ENCODE measurements at regions of chr1 and their contacts with region 1.

Region 1: DNA sequence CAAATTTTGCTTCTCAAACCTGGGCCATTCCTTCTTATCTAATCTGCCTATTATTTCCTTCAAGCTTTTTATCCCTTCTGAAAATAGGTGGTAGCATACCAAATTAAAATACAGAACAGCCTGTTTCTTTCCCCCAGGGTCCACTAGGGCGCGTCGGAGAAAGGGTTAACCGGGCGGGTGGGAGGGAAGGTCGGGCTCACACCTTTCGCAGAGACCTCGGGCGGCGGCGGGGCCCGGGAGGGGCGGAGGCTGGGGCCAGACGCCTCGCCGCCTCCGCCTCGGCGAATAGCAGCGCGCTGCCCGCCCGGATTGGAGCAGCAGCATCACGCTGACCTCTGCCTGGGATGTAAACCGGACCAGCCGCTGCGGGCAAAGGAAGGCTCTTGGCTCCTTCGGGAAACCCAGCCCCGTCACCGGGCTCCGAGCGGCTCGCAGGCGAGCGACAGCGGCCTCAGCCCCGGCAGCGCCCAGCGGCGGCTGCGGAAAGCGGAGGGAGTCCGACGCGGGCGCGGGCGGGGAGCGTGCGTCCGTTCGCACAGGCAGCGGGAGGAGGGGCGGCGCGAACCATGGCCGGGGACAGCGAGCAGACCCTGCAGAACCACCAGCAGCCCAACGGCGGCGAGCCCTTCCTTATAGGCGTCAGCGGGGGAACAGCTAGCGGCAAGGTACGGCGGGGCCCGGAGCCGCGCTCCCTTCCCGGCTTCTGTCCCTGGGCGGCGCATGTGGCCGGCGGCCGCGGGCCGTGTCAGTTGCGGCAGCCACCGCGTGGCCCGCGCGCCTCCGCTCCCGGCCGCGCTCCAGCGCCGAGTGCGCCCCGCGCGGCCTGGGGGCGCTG is at the start of gene UCK2:
- DNase-seq: peak; percentile 81
- H3K4me3 ChIP-seq: peak within 1 kb of the TSS; percentile 84
- H3K27ac ChIP-seq: peak within 1 kb of the TSS; percentile 85
- H3K4me1 ChIP-seq: peaks cover 14% of the 10 kb centered on the region
- CTCF ChIP-seq: no peak; the same call in 1 of the 2 replicates
- total RNA-seq, gene UCK2: 65.6 and 75.8 TPM in 2 replicates

Region 2: DNA sequence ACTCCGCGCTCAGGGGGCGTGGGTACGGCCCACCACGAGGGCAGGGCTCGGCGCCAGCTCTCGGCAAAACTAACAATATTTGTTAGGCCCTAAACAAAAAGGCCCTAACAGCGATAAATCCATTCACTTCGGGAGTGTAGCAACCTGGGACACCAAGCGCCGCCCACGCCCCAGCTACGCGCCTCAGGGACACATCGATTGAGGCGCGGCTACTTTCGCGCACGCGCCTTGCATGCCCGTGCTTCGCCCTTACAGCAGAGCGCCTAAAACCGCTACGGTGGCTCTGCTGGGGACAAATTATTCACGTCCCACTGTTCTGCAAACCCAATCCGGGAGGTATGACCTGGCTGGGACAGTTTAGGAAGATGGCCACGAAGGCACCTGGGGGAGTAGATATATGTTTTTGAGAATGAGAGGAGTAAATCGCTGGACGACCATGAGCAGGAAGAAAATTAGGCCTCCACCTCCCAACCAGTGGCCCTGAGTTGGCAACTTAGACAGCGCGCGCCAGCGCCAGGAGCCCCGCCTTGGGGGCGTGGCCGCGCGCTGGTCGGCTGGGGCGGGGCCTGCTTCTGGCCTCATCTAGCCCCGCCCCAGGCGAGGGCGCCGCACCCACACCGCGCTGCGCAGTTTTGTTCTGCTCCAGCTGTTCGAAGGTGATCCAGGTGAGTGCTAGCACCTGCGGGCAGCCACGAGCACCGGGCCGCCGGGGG is 196.7 kb before region 1 on chr1 and contains the start of gene MGST3:
- CTCF ChIA-PET with region 1: no interaction called
- POLR2A ChIA-PET with region 1: no interaction called
- intact Hi-C with region 1: loop called (anchors 2 kb)
- DNase-seq: peak; percentile 97
- H3K4me3 ChIP-seq: peak within 1 kb of the TSS; percentile 88
- H3K27ac ChIP-seq: peak within 1 kb of the TSS; percentile 77
- H3K4me1 ChIP-seq: peaks cover 53% of the 10 kb centered on the region
- CTCF ChIP-seq: no peak
- total RNA-seq, gene MGST3: 95.7 and 127 TPM in 2 replicates

Region 3: GRCh38 chr1:165697881-165698760 is 129.4 kb before region 1 on chr1 and contains the start of gene ALDH9A1:
- CTCF ChIA-PET with region 1: no interaction called
- POLR2A ChIA-PET with region 1: interaction called, 3 read pairs
- intact Hi-C with region 1: loop called (anchors 1 kb)
- DNase-seq: peak; percentile 87
- H3K4me3 ChIP-seq: peak within 1 kb of the TSS; percentile 68
- H3K27ac ChIP-seq: peak within 1 kb of the TSS; percentile 85
- H3K4me1 ChIP-seq: peaks cover 4% of the 10 kb centered on the region
- CTCF ChIP-seq: peak; percentile 69
- total RNA-seq, gene ALDH9A1: 22.5 and 36.0 TPM in 2 replicates

Region 4: DNA sequence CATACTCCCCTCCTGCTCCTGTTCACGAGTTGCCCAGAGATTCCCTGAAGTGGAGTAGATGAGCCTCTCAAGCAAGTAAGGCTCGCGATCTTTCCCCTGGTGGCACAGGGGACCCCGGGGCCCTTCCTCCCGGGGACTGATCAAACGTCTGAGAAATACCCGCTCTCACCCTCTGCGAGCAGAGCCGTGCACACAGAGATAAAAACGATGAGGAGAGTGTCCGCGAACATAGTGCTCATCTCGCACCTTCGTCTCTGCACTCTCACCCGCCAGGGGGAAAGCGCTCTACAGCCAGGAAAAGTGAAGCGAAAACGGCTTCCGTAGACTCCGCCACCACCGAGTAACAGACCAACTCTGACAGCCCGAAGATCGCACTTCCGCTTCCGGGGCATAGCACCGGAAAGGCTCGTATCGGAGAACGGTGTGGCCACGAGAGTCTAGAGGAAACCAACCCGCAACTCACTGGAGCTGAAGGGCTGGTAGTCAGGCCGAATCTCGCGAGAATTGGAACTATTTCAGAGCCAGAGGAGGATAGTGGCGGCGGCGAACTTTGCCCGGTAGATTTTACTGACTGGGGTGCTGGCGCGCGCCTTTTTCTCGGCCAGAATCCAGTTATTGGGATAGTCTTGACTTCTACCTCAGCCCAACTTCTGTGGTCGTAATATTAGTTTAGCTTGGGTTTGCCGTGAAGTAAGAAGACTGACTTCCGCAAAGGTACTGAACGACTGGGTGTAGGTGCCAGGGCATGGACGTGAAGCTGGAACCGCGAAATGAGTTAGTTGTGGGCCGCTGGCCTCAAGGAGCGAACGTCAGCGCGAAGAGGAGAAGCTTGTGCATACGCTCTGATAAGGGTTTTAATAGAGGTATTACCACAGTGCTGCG is 58.7 kb before region 1 on chr1 and contains the start of gene TMCO1:
- CTCF ChIA-PET with region 1: interaction called, 5 read pairs
- POLR2A ChIA-PET with region 1: interaction called, 27 read pairs
- intact Hi-C with region 1: loop called (anchors 1 kb)
- DNase-seq: peak; percentile 99
- H3K4me3 ChIP-seq: peak within 1 kb of the TSS; percentile 85
- H3K27ac ChIP-seq: peak within 1 kb of the TSS; percentile 78
- H3K4me1 ChIP-seq: peaks cover 17% of the 10 kb centered on the region
- CTCF ChIP-seq: peak; percentile 38; the same call in 1 of the 2 replicates
- total RNA-seq, gene TMCO1: 22.9 and 23.7 TPM in 2 replicates

Region 5: GRCh38 chr1:165842671-165843129 is 15.2 kb after region 1 on chr1:
- CTCF ChIA-PET with region 1: interaction called, 3 read pairs
- POLR2A ChIA-PET with region 1: interaction called, 19 read pairs
- intact Hi-C with region 1: no loop called
- DNase-seq: peak; percentile 63
- H3K4me3 ChIP-seq: no peak overlapping the region
- H3K27ac ChIP-seq: no peak overlapping the region
- H3K4me1 ChIP-seq: peaks cover 25% of the 10 kb centered on the region
- CTCF ChIP-seq: no peak

Region 6: GRCh38 chr1:165871311-165872067 is 44.0 kb after region 1 on chr1:
- CTCF ChIA-PET with region 1: no interaction called
- POLR2A ChIA-PET with region 1: interaction called, 6 read pairs
- intact Hi-C with region 1: loop called (anchors 1 kb)
- DNase-seq: peak; percentile 84
- H3K4me3 ChIP-seq: no peak overlapping the region
- H3K27ac ChIP-seq: peak overlapping the region; percentile 54
- H3K4me1 ChIP-seq: peaks cover 18% of the 10 kb centered on the region
- CTCF ChIP-seq: peak; percentile 89

Region 7: GRCh38 chr1:165914136-165914798 is 86.8 kb after region 1 on chr1:
- CTCF ChIA-PET with region 1: no interaction called
- POLR2A ChIA-PET with region 1: interaction called, 3 read pairs
- intact Hi-C with region 1: loop called (anchors 5 kb)
- DNase-seq: peak; percentile 73
- H3K4me3 ChIP-seq: no peak overlapping the region
- H3K27ac ChIP-seq: no peak overlapping the region
- H3K4me1 ChIP-seq: peaks cover 7% of the 10 kb centered on the region
- CTCF ChIP-seq: peak; percentile 96